Mammary epithelial cell (primary cell): ENCODE measurements at regions of chr16 and their contacts with region 1.

Region 1: DNA sequence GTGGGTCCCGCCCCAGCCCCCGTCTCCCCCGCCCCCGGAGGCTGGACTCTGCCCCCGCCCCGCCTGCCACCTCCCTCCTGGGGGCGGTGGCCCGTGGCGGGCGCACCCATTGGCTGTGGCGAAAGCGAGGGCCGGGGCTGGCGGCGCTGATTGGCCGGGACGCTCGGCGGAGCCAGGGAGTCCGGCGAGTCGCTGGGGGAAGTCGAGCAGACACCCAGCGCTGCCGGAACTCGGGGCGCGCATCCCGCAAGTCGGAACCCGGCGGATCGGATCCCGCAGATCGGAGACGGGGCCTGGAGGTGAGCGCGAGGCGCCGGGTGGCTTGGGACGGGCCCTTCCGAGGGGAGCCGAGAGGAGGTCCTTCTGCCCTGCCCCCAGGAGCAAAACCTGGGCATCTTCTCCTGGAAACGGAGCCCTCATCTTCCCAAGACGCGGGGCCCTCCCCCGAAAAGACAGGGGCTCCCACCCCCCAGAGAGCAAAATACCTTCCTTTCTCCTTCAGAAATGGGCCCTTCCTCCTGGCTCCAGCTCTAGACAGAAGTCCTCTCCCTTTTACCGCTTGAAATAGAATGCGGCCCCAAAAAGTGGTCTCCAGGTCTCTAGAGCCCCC is at the start of gene ABAT:
- DNase-seq: peak; percentile 86
- H3K4me3 ChIP-seq: peak within 1 kb of the TSS; percentile 69 to 87 (median 81)
- H3K27ac ChIP-seq: peak within 1 kb of the TSS; percentile 32
- H3K4me1 ChIP-seq: peaks cover 41% of the 10 kb centered on the region
- H3K27me3 ChIP-seq: no peaks in the 10 kb centered on the region
- CTCF ChIP-seq: no peak
- total RNA-seq, gene ABAT: 13.6 to 20.5 TPM

Region 2: GRCh38 chr16:8489580-8489979 is 184.9 kb before region 1 on chr16:
- CTCF ChIA-PET with region 1: no interaction called
- dilution Hi-C with region 1: no loop called
- in situ Hi-C with region 1: no loop called
- intact Hi-C with region 1: no loop called
- DNase-seq: no peak
- H3K4me3 ChIP-seq: no peak overlapping the region
- H3K27ac ChIP-seq: no peak overlapping the region
- H3K4me1 ChIP-seq: no peaks in the 10 kb centered on the region
- H3K27me3 ChIP-seq: no peaks in the 10 kb centered on the region
- CTCF ChIP-seq: no peak

Region 3: GRCh38 chr16:8716592-8716991 is 42.1 kb after region 1 on chr16:
- CTCF ChIA-PET with region 1: no interaction called
- dilution Hi-C with region 1: no loop called
- in situ Hi-C with region 1: no loop called
- intact Hi-C with region 1: loop called (anchors 2 kb)
- DNase-seq: peak; percentile 97
- H3K4me3 ChIP-seq: no peak overlapping the region
- H3K27ac ChIP-seq: peak overlapping the region; percentile 23
- H3K4me1 ChIP-seq: peaks cover 5% of the 10 kb centered on the region
- H3K27me3 ChIP-seq: peaks cover 5% of the 10 kb centered on the region
- CTCF ChIP-seq: no peak

Region 4: DNA sequence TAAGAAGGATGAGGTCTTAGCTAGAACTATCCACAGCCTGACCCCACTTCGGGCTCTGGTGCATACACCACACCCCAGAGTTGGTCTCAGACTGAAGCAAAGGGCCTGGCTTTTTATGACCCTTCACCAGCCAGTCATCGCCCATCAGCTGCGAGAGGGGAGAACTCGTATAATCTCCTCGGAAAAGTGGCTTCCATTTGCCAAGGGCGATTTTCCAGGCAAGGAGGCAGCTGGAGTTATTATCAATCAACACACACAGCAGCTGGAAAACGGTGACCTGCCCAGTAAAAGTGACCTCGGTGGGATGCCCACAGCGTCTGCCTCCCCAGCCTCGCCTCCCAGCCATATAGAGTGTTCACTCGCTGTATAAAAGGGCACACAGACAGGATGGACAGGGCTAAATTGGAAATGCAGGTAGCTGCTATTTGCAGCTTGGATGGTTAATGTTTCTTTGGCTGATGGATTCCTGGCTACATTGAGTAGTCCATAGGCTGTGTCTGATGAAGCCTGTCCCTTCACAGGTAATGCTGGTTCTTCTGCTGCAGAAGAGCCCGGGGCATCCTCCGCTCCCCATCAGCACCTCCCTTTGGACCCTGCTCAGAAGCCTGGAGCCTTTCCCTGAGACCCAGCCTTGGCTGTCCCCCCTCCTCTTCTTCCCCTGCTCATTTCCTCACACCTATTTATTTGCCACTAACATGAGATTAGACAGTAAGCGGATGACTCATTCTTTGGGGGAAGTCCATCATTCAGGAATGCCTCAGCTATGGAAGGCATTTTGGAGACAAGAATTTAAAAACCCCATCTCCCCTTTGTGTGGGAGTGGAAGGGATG is 77.2 kb after region 1 on chr16:
- CTCF ChIA-PET with region 1: no interaction called
- dilution Hi-C with region 1: no loop called
- in situ Hi-C with region 1: no loop called
- intact Hi-C with region 1: loop called (anchors 2 kb)
- DNase-seq: peak; percentile 70
- H3K4me3 ChIP-seq: no peak overlapping the region
- H3K27ac ChIP-seq: no peak overlapping the region
- H3K4me1 ChIP-seq: peaks cover 8% of the 10 kb centered on the region
- H3K27me3 ChIP-seq: no peaks in the 10 kb centered on the region
- CTCF ChIP-seq: no peak

Region 5: GRCh38 chr16:9134739-9135138 is 460.2 kb after region 1 on chr16:
- CTCF ChIA-PET with region 1: no interaction called
- dilution Hi-C with region 1: no loop called
- in situ Hi-C with region 1: no loop called
- intact Hi-C with region 1: loop called (anchors 10 kb)
- DNase-seq: no peak
- H3K4me3 ChIP-seq: no peak overlapping the region
- H3K27ac ChIP-seq: no peak overlapping the region
- H3K4me1 ChIP-seq: peaks cover 3% of the 10 kb centered on the region
- H3K27me3 ChIP-seq: no peaks in the 10 kb centered on the region
- CTCF ChIP-seq: peak; percentile 42 to 70